ENCODE measurements at regions of chr3 and their contacts with region 1.

Region 1: GRCh38 chr3:131273401-131273800 is 108.2 kb upstream of the NUDT16 start:
- DNase-seq: no peak
- H3K4me3 ChIP-seq: no peak overlapping the region
- H3K27ac ChIP-seq: no peak overlapping the region
- H3K4me1 ChIP-seq: no peaks in the 10 kb centered on the region
- H3K27me3 ChIP-seq: no peaks in the 10 kb centered on the region
- CTCF ChIP-seq: no peak

Region 2: GRCh38 chr3:131009698-131010097 is 263.7 kb before region 1 on chr3:
- CTCF ChIA-PET with region 1: interaction called, 10 read pairs
- POLR2A ChIA-PET with region 1: no interaction called
- intact Hi-C with region 1: no loop called
- DNase-seq: no peak
- H3K4me3 ChIP-seq: no peak overlapping the region
- H3K27ac ChIP-seq: no peak overlapping the region
- H3K4me1 ChIP-seq: no peaks in the 10 kb centered on the region
- H3K27me3 ChIP-seq: no peaks in the 10 kb centered on the region
- CTCF ChIP-seq: no peak